ENCODE measurements at regions of chr3 and their contacts with region 1.

Region 1: DNA sequence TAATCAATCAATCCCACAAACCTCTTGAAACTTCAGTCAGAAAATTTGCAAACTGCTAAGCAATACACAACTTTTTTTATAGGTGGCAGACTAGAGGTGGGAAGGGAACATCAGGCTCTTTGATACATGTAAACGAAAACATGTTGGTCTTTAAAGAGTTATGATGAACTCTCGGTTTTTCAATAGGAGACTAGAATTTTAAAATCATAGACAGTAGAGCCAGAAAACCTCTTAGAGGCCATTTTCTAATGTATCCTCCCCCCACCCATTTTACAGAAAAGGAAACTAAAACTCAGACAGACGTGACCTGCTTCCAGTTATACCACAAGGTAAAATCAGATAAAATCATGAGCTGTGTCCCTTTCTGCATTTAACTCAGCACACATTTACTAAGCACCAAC is 179.1 kb upstream of the LPP start:
- DNase-seq: peak; percentile 79
- H3K4me3 ChIP-seq: peak overlapping the region; percentile 54
- H3K27ac ChIP-seq: peak overlapping the region; percentile 99
- H3K4me1 ChIP-seq: peaks cover 100% of the 10 kb centered on the region
- CTCF ChIP-seq: peak; percentile 84

Region 2: GRCh38 chr3:187025656-187026316 is 949.1 kb before region 1 on chr3:
- CTCF ChIA-PET with region 1: no interaction called
- POLR2A ChIA-PET with region 1: interaction called, 4 read pairs
- intact Hi-C with region 1: loop called (anchors 10 kb)
- DNase-seq: peak; percentile 89
- H3K4me3 ChIP-seq: peak overlapping the region; percentile 94
- H3K27ac ChIP-seq: peak overlapping the region; percentile 98
- H3K4me1 ChIP-seq: peaks cover 72% of the 10 kb centered on the region
- CTCF ChIP-seq: no peak

Region 3: DNA sequence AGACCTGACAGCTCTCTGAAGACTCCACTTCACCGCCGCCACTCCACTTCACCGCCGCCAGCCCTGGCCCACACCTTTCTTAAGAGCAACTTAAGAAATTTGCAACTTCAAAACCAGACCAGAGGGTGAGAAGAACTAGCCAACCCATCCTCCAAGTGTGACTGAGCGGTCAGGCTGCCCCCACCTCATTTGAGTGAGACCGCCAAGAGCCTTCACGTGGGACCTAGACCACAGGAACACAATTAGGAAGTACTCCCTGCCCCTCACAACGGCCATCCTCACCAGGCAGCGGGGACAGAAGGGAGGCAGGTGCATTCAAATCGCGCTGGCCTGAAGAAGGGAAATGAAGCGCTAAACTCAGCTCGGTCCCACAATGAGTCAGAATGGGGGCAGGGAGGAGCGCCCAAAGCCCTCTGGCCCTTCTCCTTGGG is 72.8 kb before region 1 on chr3:
- CTCF ChIA-PET with region 1: interaction called, 3 read pairs
- POLR2A ChIA-PET with region 1: interaction called, 305 read pairs
- intact Hi-C with region 1: loop called (anchors 1 kb)
- DNase-seq: peak; percentile 96
- H3K4me3 ChIP-seq: peak overlapping the region; percentile 59
- H3K27ac ChIP-seq: peak overlapping the region; percentile 100
- H3K4me1 ChIP-seq: peaks cover 98% of the 10 kb centered on the region
- CTCF ChIP-seq: no peak

Region 4: GRCh38 chr3:188000361-188000861 is 25.5 kb after region 1 on chr3:
- CTCF ChIA-PET with region 1: no interaction called
- POLR2A ChIA-PET with region 1: interaction called, 122 read pairs
- intact Hi-C with region 1: no loop called
- DNase-seq: peak; percentile 82
- H3K4me3 ChIP-seq: peak overlapping the region; percentile 60
- H3K27ac ChIP-seq: peak overlapping the region; percentile 96
- H3K4me1 ChIP-seq: peaks cover 83% of the 10 kb centered on the region
- CTCF ChIP-seq: no peak

Region 5: GRCh38 chr3:188097791-188098190 is 122.9 kb after region 1 on chr3:
- CTCF ChIA-PET with region 1: interaction called, 3 read pairs
- POLR2A ChIA-PET with region 1: interaction called, 19 read pairs
- intact Hi-C with region 1: no loop called
- DNase-seq: peak; percentile 90
- H3K4me3 ChIP-seq: peak overlapping the region; percentile 41
- H3K27ac ChIP-seq: peak overlapping the region; percentile 81
- H3K4me1 ChIP-seq: peaks cover 52% of the 10 kb centered on the region
- CTCF ChIP-seq: no peak

Region 6: DNA sequence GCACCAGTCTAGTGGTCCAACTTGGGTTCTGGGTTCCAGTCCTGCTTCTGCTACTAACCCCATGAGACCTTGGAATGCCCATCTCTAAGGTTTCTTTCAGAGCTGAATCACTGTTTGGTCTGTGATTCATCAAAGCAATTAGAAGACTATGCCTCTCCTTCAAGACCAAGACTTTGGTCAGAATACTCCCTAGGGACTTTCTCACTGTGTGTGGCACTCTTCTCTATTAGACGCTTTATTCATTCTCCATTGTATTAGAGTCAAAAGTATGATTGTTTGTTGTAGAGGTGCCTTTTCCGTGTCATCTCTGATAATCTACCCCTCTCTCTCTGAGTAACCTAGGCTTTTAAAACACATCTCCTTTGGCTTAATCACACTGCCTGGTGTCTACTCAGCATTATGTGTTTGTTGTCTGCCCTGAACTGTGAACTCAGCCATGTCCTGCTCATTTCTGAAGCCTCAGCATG is 269.6 kb after region 1 on chr3:
- CTCF ChIA-PET with region 1: no interaction called
- POLR2A ChIA-PET with region 1: interaction called, 53 read pairs
- intact Hi-C with region 1: loop called (anchors 1 kb)
- DNase-seq: peak; percentile 76
- H3K4me3 ChIP-seq: peak overlapping the region; percentile 21
- H3K27ac ChIP-seq: peak overlapping the region; percentile 98
- H3K4me1 ChIP-seq: peaks cover 96% of the 10 kb centered on the region
- CTCF ChIP-seq: no peak

Region 7: GRCh38 chr3:188584162-188584529 is 609.3 kb after region 1 on chr3:
- CTCF ChIA-PET with region 1: no interaction called
- POLR2A ChIA-PET with region 1: no interaction called
- intact Hi-C with region 1: loop called (anchors 5 kb)
- DNase-seq: peak; percentile 14
- H3K4me3 ChIP-seq: peak overlapping the region; percentile 9
- H3K27ac ChIP-seq: no peak overlapping the region
- H3K4me1 ChIP-seq: peaks cover 81% of the 10 kb centered on the region
- CTCF ChIP-seq: no peak

Measured in OCI-LY7 (cell line).